GM10248 (cell line): ENCODE measurements at regions of chr11 and their contacts with region 1.

Region 1: DNA sequence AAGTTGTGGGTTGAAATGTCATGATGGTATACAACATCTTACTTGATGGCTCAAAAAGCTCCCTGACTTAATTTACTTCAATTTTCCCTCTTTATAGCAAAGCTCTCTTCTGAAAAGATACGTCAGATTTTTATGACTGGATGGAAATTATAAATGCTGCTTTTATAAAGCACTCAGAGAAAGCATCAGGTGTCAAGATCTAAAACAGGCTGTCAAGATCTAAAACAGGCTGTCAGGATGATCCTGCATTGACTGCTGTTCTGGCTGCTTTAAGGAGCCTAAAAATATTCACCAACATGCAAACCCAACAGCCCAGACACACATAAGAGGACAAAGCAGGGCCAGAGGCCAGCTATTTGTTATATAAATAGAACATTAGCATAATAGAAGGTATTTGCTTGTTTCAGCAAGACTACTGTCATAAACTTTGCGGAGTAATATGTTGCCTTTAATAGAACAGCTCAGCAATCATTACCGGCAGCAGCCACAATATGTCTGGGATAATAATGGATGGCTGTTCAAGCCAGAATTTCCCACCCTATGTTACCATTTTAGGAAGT is 77.3 kb upstream of the ANO5 start:
- DNase-seq: no peak
- CTCF ChIP-seq: no peak

Region 2: DNA sequence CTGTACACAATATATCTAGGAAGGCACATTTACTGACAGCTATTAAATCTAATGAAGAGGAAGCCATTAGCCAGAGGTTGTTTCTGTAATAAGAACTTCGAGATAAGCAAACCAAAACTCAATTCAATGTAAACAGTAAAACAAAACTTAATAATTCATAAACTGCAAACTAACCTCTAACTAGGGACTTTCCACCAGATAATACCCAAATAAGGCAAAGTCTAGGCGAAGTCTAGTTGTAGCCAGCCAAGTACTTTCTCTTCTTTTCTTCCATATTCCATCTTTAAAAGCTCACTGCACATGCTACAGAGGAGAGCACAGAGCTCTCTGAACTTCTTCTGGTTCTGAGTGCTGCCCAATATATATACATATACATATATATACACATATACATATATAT is 152.5 kb before region 1 on chr11:
- CTCF ChIA-PET with region 1: no interaction called
- POLR2A ChIA-PET with region 1: no interaction called
- DNase-seq: no peak
- CTCF ChIP-seq: no peak

Region 3: DNA sequence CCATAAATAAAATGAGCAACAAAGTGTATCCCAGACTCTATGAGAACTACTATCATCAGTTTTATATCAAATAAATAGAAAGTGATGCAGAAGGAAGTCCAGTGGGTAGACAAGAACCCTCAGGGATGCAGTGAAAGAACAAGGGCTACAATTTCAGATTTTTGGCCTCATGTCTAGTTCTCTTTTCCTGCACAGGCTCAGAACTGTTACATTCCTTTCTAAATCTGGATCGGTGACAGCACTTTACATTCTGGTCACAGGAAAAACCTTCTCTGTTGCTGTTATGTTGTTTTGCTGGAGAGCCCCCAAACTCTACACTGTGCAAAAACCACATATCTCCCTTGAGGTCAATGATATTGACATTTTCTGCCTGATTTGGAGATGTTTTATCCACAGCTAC is 31.5 kb before region 1 on chr11:
- CTCF ChIA-PET with region 1: no interaction called
- POLR2A ChIA-PET with region 1: no interaction called
- DNase-seq: no peak
- CTCF ChIP-seq: no peak

Region 4: GRCh38 chr11:22130462-22131053 is 15.0 kb after region 1 on chr11:
- CTCF ChIA-PET with region 1: interaction called, 10 read pairs
- POLR2A ChIA-PET with region 1: no interaction called
- DNase-seq: no peak
- CTCF ChIP-seq: peak; percentile 18